T-cell (primary cell): ENCODE measurements at regions of chr7 and their contacts with region 1.

Region 1: DNA sequence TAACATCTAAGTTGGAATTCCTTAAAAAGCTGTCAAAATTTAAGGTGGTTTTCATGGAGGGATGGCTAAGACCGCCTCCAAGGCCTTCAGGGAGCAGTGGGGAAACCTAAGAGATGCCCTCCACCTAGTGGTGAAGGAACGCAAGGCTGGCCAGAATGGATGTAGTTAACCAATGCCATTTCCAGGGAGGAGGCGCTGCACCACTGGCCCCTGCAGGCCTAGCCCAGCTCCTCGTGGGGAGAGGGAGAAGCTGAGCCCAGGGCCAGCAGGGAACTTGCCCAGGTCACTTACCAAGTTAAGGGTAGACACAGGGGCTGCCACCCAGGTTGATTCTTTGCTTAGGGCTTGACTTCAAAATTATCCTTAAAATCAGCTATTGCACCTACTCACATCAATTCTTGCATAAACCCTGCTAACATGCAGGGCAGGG is 32.0 kb downstream of the FIGNL1 start:
- DNase-seq: peak; percentile 28 to 84 (median 56)
- ATAC-seq: peak; percentile 84 to 92 (median 90)
- H3K4me3 ChIP-seq: no peak overlapping the region
- H3K4me3 Mint-ChIP-seq: no peak overlapping the region
- H3K27ac ChIP-seq: no peak overlapping the region
- H3K27ac Mint-ChIP-seq: no peak overlapping the region
- H3K4me1 ChIP-seq: peaks cover 8 to 18% of the 10 kb centered on the region in 2 experiments
- H3K4me1 Mint-ChIP-seq: peaks cover 24 to 34% (median 25%) of the 10 kb centered on the region in 3 donors
- H3K27me3 ChIP-seq: no peaks in the 10 kb centered on the region
- H3K27me3 Mint-ChIP-seq: no peaks in the 10 kb centered on the region

Region 2: GRCh38 chr7:50142425-50143017 is 275.6 kb before region 1 on chr7:
- CTCF ChIA-PET with region 1: interaction called, 10 to 22 read pairs
- POLR2A ChIA-PET with region 1: no interaction called
- DNase-seq: peak in 13 of 35 experiments; percentile 14 to 81 (median 30)
- ATAC-seq: peak in 3 of 4 experiments; percentile 46 to 81 (median 74)
- H3K4me3 ChIP-seq: no peak overlapping the region
- H3K4me3 Mint-ChIP-seq: peak overlapping the region; percentile 39 to 57 (median 57)
- H3K27ac ChIP-seq: peak overlapping the region; percentile 7
- H3K27ac Mint-ChIP-seq: peak overlapping the region; percentile 80 to 84
- H3K4me1 ChIP-seq: peaks cover 3 to 24% of the 10 kb centered on the region in 2 experiments
- H3K4me1 Mint-ChIP-seq: peaks cover 21 to 32% (median 26%) of the 10 kb centered on the region in 3 donors
- H3K27me3 ChIP-seq: no peaks in the 10 kb centered on the region
- H3K27me3 Mint-ChIP-seq: no peaks in the 10 kb centered on the region

Region 3: DNA sequence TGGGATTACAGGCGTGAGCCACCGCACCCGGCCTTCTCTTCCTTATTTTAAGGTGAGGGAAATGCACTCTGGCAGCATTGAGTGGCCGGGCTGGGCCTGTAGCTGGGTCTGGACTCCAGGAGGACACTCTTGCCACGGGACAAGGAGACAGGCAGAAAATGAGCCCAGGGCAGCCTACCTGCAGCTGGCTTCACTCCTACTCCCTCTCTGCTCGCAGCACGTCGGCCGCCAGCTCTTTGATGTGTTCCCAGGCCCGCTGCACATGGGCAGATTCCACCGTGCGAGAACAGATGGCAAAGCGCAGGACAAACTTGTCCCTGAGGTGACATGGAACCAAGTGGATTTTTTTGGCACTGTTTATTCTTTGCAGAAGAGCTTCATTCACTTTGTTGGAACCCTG is 44.9 kb after region 1 on chr7:
- CTCF ChIA-PET with region 1: no interaction called
- POLR2A ChIA-PET with region 1: no interaction called
- DNase-seq: no peak
- ATAC-seq: no peak
- H3K4me3 ChIP-seq: no peak overlapping the region
- H3K4me3 Mint-ChIP-seq: no peak overlapping the region
- H3K27ac ChIP-seq: no peak overlapping the region
- H3K27ac Mint-ChIP-seq: no peak overlapping the region
- H3K4me1 ChIP-seq: peaks cover 0 to 6% of the 10 kb centered on the region in 2 experiments
- H3K4me1 Mint-ChIP-seq: peaks cover 6 to 7% (median 7%) of the 10 kb centered on the region in 3 donors
- H3K27me3 ChIP-seq: peaks cover 0 to 5% of the 10 kb centered on the region in 2 experiments
- H3K27me3 Mint-ChIP-seq: peaks cover 1 to 2% of the 10 kb centered on the region in 2 donors

Region 4: DNA sequence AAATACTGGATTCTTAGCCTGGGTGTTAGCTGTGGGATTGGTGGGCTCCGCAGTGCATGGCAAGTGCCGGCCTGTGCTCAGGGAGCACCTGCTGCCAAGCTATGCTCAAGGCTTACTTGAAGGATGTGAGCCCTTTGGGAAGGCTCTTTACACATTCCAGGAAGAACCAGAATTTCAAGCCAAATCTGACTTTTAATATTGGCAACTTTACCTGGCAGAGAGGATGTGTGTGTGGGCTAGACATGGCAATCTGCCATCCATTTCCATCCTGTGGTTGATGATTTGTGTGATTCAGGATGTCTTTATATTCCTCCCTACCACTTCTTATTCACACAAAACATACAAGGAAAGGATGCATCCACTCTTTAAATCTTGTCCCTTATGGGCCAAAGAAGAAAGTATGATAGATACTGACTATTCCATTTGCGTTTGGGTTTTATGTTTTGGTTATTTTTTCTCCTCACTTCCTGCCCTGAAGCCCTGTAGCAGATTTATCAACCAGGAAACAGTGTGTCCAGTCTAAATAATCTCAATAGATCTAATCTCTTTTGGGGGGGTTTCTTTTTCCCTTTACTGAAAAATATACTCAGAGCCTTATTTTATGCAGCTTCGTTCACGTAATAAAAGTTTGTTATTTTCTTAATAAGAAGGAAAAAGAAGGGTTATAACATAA is 651.4 kb after region 1 on chr7:
- CTCF ChIA-PET with region 1: no interaction called
- POLR2A ChIA-PET with region 1: no interaction called
- DNase-seq: no peak
- ATAC-seq: no peak
- H3K4me3 ChIP-seq: no peak overlapping the region
- H3K4me3 Mint-ChIP-seq: no peak overlapping the region
- H3K27ac ChIP-seq: no peak overlapping the region
- H3K27ac Mint-ChIP-seq: no peak overlapping the region
- H3K4me1 ChIP-seq: peaks cover 0 to 2% of the 10 kb centered on the region in 2 experiments
- H3K4me1 Mint-ChIP-seq: no peaks in the 10 kb centered on the region
- H3K27me3 ChIP-seq: no peaks in the 10 kb centered on the region
- H3K27me3 Mint-ChIP-seq: no peaks in the 10 kb centered on the region